Head of caudate nucleus (tissue), 42 donors: ENCODE measurements at regions of chr3 and their contacts with region 1.

Region 1: DNA sequence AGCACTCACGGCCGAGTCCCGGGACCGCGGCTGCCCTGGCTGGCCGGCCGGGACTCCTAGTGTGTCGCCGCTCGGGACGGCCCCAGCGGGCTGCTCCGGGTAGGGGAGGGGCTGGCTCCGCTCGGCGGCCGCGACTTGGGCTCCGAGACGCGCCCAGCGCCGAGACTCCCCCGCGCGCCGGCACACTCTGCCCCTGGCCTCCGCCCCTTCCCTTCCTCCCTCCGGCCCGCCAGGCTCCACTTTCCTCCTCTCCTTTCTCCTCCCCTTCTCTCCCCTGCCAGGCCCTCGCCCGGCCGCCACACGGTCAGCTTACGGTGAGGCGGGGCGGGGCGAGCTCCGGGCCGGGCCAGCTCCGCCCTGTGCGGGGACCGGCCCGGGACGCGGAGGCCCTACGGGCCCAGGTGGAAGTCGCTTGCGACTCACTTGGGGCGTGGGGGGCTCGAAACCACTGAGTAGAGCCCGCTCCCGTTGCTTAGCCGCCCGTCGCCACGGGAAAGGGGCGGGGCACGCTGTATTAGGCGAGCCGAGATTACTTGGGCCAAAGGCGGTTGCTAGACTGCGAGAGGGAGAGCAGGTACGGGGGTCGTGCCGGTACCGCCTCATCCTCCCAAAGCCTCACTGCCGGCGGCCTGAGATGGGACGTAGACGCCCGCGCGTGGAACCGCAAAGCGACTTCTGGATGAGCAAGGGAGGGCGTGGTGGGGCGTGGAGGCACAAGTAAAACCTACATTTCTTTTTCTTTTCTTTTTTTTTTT is at the start of gene ITGB5:
- DNase-seq: peak in 40 of 42 donors; percentile 21 to 80 (median 52)

Region 2: GRCh38 chr3:124552239-124552638 is 335.1 kb before region 1 on chr3:
- intact Hi-C with region 1: no loop called
- DNase-seq: no peak

Region 3: GRCh38 chr3:124775877-124776276 is 111.5 kb before region 1 on chr3:
- intact Hi-C with region 1: loop called (anchors 5 kb)
- DNase-seq: peak in 2 of 42 donors; percentile 5 to 20

Region 4: GRCh38 chr3:124800511-124801258 is 86.7 kb before region 1 on chr3:
- intact Hi-C with region 1: no loop called
- DNase-seq: peak in 24 of 42 donors; percentile 14 to 75 (median 43)

Region 5: GRCh38 chr3:125087768-125088391 is 200.5 kb after region 1 on chr3:
- intact Hi-C with region 1: no loop called
- DNase-seq: peak in 1 of 42 donors; percentile 30

Region 6: GRCh38 chr3:125357032-125357658 is 469.8 kb after region 1 on chr3:
- intact Hi-C with region 1: no loop called
- DNase-seq: peak in 40 of 42 donors; percentile 29 to 82 (median 62)